ENCODE measurements at regions of chr21 and their contacts with region 1.

Region 1: GRCh38 chr21:42238185-42238934 is 19.4 kb downstream of the ABCG1 start:
- DNase-seq: peak; percentile 56 to 84 (median 78)
- H3K4me3 ChIP-seq: peak overlapping the region; percentile 20
- H3K4me3 Mint-ChIP-seq: peak overlapping the region; percentile 53 to 82 (median 60)
- H3K27ac ChIP-seq: peak overlapping the region; percentile 60
- H3K27ac Mint-ChIP-seq: peak overlapping the region; percentile 67 to 99 (median 96)
- H3K4me1 ChIP-seq: peaks cover 66% of the 10 kb centered on the region
- H3K4me1 Mint-ChIP-seq: peaks cover 64 to 80% (median 65%) of the 10 kb centered on the region in 3 donors
- H3K27me3 ChIP-seq: no peaks in the 10 kb centered on the region
- H3K27me3 Mint-ChIP-seq: peaks cover 0 to 3% of the 10 kb centered on the region in 2 donors

Region 2: GRCh38 chr21:41953831-41954653 is 284.3 kb before region 1 on chr21 and contains the start of gene C2CD2:
- CTCF ChIA-PET with region 1: no interaction called
- POLR2A ChIA-PET with region 1: no interaction called
- DNase-seq: no peak
- H3K4me3 ChIP-seq: peak within 1 kb of the TSS; percentile 41
- H3K4me3 Mint-ChIP-seq: peak within 1 kb of the TSS in 6 of 7 donors; percentile 39 to 74 (median 52)
- H3K27ac ChIP-seq: peak within 1 kb of the TSS; percentile 6
- H3K27ac Mint-ChIP-seq: no peak within 1 kb of the TSS
- H3K4me1 ChIP-seq: peaks cover 8% of the 10 kb centered on the region
- H3K4me1 Mint-ChIP-seq: peaks cover 5 to 15% (median 10%) of the 10 kb centered on the region in 3 donors
- H3K27me3 ChIP-seq: peaks cover 7% of the 10 kb centered on the region
- H3K27me3 Mint-ChIP-seq: peaks cover 28 to 43% of the 10 kb centered on the region in 2 donors
- total RNA-seq, gene C2CD2: 4.3 to 5.0 TPM

Region 3: DNA sequence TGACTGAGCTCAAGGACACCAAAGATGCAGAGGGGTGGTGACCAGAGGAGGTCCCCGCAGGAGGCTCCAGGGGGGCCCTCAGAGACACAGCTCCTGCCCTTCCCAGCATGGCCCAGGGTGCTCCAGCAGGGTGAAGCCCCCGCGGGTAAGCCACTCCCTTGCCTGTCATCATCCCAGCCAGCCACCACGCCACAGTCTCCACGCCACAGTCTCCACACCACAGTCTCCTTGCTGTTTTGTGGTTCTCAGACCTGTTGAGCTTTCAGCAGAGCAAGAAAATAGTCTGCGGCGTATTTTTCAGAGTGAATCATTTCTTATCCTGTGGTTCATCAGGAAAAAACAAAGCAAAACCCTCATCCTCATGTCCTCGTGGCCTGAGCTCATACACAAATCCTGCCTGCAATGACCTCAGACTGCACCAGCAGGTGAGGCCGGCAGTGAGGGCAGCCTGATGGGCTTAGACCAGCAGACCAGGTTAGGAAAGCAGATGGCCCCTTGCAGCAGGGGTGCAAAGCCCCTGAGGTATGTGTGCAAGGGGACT is 45.2 kb before region 1 on chr21:
- CTCF ChIA-PET with region 1: interaction called, 10 read pairs
- POLR2A ChIA-PET with region 1: interaction called, 6 read pairs
- DNase-seq: peak; percentile 38 to 82 (median 66)
- H3K4me3 ChIP-seq: no peak overlapping the region
- H3K4me3 Mint-ChIP-seq: peak overlapping the region; percentile 53 to 84 (median 64)
- H3K27ac ChIP-seq: no peak overlapping the region
- H3K27ac Mint-ChIP-seq: peak overlapping the region; percentile 70 to 95 (median 90)
- H3K4me1 ChIP-seq: peaks cover 56% of the 10 kb centered on the region
- H3K4me1 Mint-ChIP-seq: peaks cover 54 to 62% (median 60%) of the 10 kb centered on the region in 3 donors
- H3K27me3 ChIP-seq: no peaks in the 10 kb centered on the region
- H3K27me3 Mint-ChIP-seq: no peaks in the 10 kb centered on the region

Region 4: GRCh38 chr21:42199488-42200458 is 38.6 kb before region 1 on chr21:
- CTCF ChIA-PET with region 1: interaction called, 11 read pairs
- POLR2A ChIA-PET with region 1: no interaction called
- DNase-seq: peak in 3 of 5 donors; percentile 35 to 55 (median 50)
- H3K4me3 ChIP-seq: peak overlapping the region; percentile 24
- H3K4me3 Mint-ChIP-seq: peak overlapping the region; percentile 2 to 78 (median 49)
- H3K27ac ChIP-seq: no peak overlapping the region
- H3K27ac Mint-ChIP-seq: peak overlapping the region; percentile 72 to 89 (median 80)
- H3K4me1 ChIP-seq: peaks cover 39% of the 10 kb centered on the region
- H3K4me1 Mint-ChIP-seq: peaks cover 39 to 49% (median 48%) of the 10 kb centered on the region in 3 donors
- H3K27me3 ChIP-seq: no peaks in the 10 kb centered on the region
- H3K27me3 Mint-ChIP-seq: no peaks in the 10 kb centered on the region

Region 5: DNA sequence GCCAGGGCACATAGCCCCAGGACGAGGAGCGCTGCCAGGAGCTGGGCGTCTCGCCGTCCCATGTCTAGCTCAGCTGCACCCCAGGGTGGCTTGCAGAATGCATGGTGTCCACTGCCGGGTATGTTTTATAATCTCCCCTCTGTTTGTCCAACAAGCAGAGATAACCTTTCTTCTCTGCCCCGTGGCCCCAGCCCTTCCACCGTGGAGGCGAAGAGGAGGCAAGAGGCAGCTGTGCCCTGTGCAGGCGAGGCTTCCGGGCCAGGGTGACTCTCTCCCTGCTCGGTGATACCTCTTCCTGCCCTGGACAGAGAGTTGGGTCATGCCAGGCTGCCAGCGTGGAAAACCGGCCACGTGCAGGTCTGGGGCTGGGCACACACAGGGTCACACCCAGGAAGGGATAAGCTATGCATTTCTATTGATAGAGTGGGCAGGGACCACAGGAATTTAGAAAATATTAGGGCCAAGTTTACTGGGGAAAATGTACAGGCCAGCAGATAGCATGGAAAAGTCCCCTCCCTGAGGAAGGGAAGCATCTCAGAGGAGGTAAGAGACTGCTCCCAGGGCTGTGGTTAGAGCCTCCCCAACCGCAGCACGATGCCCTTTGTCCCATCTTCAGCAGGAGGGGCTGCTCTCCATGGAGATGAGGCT is 112.7 kb after region 1 on chr21 and contains the start of gene TFF2:
- CTCF ChIA-PET with region 1: no interaction called
- POLR2A ChIA-PET with region 1: no interaction called
- DNase-seq: no peak
- H3K4me3 ChIP-seq: no peak within 1 kb of the TSS
- H3K4me3 Mint-ChIP-seq: no peak within 1 kb of the TSS
- H3K27ac ChIP-seq: no peak within 1 kb of the TSS
- H3K27ac Mint-ChIP-seq: peak within 1 kb of the TSS in 1 of 8 donors; percentile 43
- H3K4me1 ChIP-seq: no peaks in the 10 kb centered on the region
- H3K4me1 Mint-ChIP-seq: no peaks in the 10 kb centered on the region
- H3K27me3 ChIP-seq: no peaks in the 10 kb centered on the region
- H3K27me3 Mint-ChIP-seq: peaks cover 3 to 10% of the 10 kb centered on the region in 2 donors
- total RNA-seq, gene TFF2: not detected